Endothelial cell of umbilical vein (primary cell): ENCODE measurements at regions of chr5 and their contacts with region 1.

Region 1: GRCh38 chr5:169265888-169266287 is 35.1 kb downstream of the SLIT3 start:
- DNase-seq: peak; percentile 24
- H3K4me3 ChIP-seq: no peak overlapping the region
- H3K27ac ChIP-seq: no peak overlapping the region
- H3K4me1 ChIP-seq: no peaks in the 10 kb centered on the region
- H3K27me3 ChIP-seq: no peaks in the 10 kb centered on the region
- CTCF ChIP-seq: peak in 1 of 2 donors; percentile 10
- POLR2A ChIP-seq: no peak

Region 2: GRCh38 chr5:169548315-169548714 is 282.4 kb after region 1 on chr5:
- CTCF ChIA-PET with region 1: interaction called, 17 read pairs
- POLR2A ChIA-PET with region 1: no interaction called
- dilution Hi-C with region 1: no loop called
- intact Hi-C with region 1: no loop called
- DNase-seq: peak; percentile 57
- H3K4me3 ChIP-seq: no peak overlapping the region
- H3K27ac ChIP-seq: no peak overlapping the region
- H3K4me1 ChIP-seq: no peaks in the 10 kb centered on the region
- H3K27me3 ChIP-seq: peaks cover 2 to 12% of the 10 kb centered on the region in 2 experiments
- CTCF ChIP-seq: peak; percentile 8 to 14
- POLR2A ChIP-seq: no peak